CD4-positive, alpha-beta T cell (primary cell): ENCODE measurements at regions of chr19 and their contacts with region 1.

Region 1: GRCh38 chr19:42244347-42245220 is 2.2 kb upstream of the GSK3A start:
- DNase-seq: peak; percentile 82 to 96 (median 88)
- ATAC-seq: peak; percentile 41
- H3K4me3 ChIP-seq: peak overlapping the region; percentile 83
- H3K4me3 Mint-ChIP-seq: peak overlapping the region; percentile 95
- H3K27ac ChIP-seq: peak overlapping the region; percentile 71 to 95
- H3K27ac Mint-ChIP-seq: peak overlapping the region; percentile 81
- H3K4me1 ChIP-seq: peaks cover 50% of the 10 kb centered on the region
- H3K4me1 Mint-ChIP-seq: peaks cover 46% of the 10 kb centered on the region
- H3K27me3 ChIP-seq: no peaks in the 10 kb centered on the region
- H3K27me3 Mint-ChIP-seq: no peaks in the 10 kb centered on the region
- CTCF ChIP-seq: peak; percentile 73

Region 2: GRCh38 chr19:42176990-42177685 is 67.4 kb before region 1 on chr19:
- CTCF ChIA-PET with region 1: interaction called, 7 read pairs
- POLR2A ChIA-PET with region 1: interaction called, 14 read pairs
- intact Hi-C with region 1: no loop called
- DNase-seq: peak; percentile 61 to 91 (median 72)
- ATAC-seq: peak; percentile 95
- H3K4me3 ChIP-seq: peak overlapping the region; percentile 56
- H3K4me3 Mint-ChIP-seq: no peak overlapping the region
- H3K27ac ChIP-seq: no peak overlapping the region
- H3K27ac Mint-ChIP-seq: no peak overlapping the region
- H3K4me1 ChIP-seq: peaks cover 34% of the 10 kb centered on the region
- H3K4me1 Mint-ChIP-seq: peaks cover 25% of the 10 kb centered on the region
- H3K27me3 ChIP-seq: peaks cover 36 to 37% of the 10 kb centered on the region in 2 experiments
- H3K27me3 Mint-ChIP-seq: peaks cover 35% of the 10 kb centered on the region
- CTCF ChIP-seq: peak; percentile 35

Region 3: DNA sequence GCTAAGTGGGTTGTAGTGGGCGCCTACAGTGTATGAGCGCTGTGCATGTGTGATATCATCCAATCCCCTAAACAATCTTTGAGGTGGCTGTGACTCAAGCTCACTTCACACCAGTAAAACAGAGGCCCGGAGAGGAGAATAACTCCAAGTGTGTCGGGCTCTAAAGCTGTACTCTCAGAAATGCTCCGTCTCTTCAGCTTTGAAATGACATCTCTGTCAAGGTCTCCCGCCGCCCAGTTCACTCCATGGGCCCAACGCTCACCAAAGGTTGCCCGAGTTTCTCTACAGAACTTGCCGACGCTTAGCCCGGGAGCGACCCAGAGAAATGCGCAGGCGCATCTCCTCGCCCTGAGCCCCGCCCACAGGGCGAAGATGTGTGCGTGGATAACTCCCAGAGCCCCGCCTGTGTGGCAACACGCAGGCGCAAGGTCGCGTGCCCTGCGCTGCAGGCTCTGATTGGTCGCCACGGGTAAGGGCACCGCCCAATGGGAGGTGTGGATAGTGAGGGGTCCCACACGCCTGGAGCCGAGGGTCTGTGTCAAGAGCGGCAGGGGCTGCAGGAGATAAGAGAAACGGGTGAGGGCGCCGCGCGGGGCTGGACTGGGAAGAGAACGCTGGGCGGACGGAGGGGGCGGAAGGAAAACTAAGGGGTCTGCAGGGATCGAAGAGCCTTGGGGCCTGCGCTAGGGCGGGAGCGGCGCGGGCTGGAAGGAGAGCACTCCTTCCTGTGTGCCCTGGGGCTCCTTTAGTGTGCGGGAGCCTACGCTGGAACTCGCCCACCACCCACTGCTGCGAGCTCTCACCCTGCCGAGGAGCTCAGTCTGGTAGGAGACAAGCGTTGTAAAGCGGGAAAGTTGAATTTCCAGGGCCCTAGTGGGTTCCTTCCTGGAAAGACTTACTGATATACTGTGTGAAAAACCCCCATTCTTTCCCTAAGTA is 24.5 kb before region 1 on chr19 and contains the start of gene ZNF526:
- CTCF ChIA-PET with region 1: interaction called, 5 read pairs
- POLR2A ChIA-PET with region 1: interaction called, 32 read pairs
- intact Hi-C with region 1: loop called (anchors 1 kb)
- DNase-seq: peak; percentile 93 to 99 (median 96)
- ATAC-seq: peak; percentile 80
- H3K4me3 ChIP-seq: peak within 1 kb of the TSS; percentile 98
- H3K4me3 Mint-ChIP-seq: peak within 1 kb of the TSS; percentile 96
- H3K27ac ChIP-seq: peak within 1 kb of the TSS; percentile 70 to 78
- H3K27ac Mint-ChIP-seq: peak within 1 kb of the TSS; percentile 93
- H3K4me1 ChIP-seq: peaks cover 64% of the 10 kb centered on the region
- H3K4me1 Mint-ChIP-seq: peaks cover 58% of the 10 kb centered on the region
- H3K27me3 ChIP-seq: no peaks in the 10 kb centered on the region
- H3K27me3 Mint-ChIP-seq: no peaks in the 10 kb centered on the region
- CTCF ChIP-seq: no peak
- total RNA-seq, gene ZNF526: 5.0 to 6.2 TPM

Region 4: GRCh38 chr19:42254989-42255765 is 10.6 kb after region 1 on chr19 and contains the start of gene ERF:
- CTCF ChIA-PET with region 1: interaction called, 3 read pairs
- POLR2A ChIA-PET with region 1: interaction called, 8 read pairs
- intact Hi-C with region 1: loop called (anchors 1 kb)
- DNase-seq: peak; percentile 89 to 98 (median 92)
- ATAC-seq: peak; percentile 75
- H3K4me3 ChIP-seq: peak within 1 kb of the TSS; percentile 100
- H3K4me3 Mint-ChIP-seq: peak within 1 kb of the TSS; percentile 93
- H3K27ac ChIP-seq: peak within 1 kb of the TSS; percentile 97 to 98
- H3K27ac Mint-ChIP-seq: peak within 1 kb of the TSS; percentile 85
- H3K4me1 ChIP-seq: peaks cover 43% of the 10 kb centered on the region
- H3K4me1 Mint-ChIP-seq: peaks cover 28% of the 10 kb centered on the region
- H3K27me3 ChIP-seq: no peaks in the 10 kb centered on the region
- H3K27me3 Mint-ChIP-seq: no peaks in the 10 kb centered on the region
- CTCF ChIP-seq: no peak
- total RNA-seq, gene ERF: 105 to 113 TPM

Region 5: DNA sequence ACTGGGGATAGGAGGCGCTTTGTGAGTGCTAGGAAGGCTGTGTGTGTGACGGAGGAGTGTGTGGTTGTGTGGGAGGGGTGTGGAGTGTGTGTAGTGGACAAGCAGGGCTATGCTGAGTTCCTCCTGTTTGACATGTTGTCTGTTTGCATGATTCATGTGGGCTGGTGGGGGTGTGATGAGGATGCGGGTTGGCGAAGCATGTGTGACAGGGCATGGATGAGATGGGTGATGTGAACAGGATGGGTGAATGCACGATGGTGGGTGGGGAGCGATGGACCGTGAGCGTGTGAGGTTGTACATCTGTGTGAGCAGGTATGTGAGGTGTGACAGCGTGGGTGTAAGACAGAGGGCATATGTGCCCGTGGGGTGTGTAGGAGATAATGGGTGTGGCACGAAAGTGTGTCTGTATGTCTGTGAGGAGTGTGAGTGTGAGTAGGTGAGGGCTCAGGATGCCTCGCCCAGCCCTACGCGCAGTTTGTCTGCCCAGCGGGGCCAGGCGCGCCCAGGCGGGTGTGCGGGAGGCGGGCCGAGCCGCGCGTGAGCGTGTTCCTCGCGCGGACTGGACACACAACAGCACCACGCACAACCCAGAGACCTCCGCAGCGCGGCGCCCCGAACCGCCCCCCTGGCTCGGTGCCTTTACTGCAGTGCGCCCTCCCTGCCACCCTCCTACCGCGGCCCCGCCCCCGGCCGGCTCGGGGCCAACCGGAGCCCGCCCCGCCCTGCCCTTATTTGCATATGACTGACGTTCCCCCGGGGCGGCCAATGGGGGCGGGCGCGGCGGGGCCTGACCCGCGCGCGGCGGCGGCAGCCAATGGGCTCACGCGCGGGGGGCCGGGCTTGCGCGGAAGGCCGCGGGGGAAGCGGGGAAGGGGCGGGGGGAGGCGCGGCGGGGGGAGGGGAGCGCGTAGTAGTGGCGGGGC is 38.8 kb after region 1 on chr19:
- CTCF ChIA-PET with region 1: interaction called, 30 read pairs
- POLR2A ChIA-PET with region 1: interaction called, 53 read pairs
- intact Hi-C with region 1: loop called (anchors 1 to 2 kb)
- DNase-seq: peak; percentile 92 to 99 (median 97)
- ATAC-seq: peak; percentile 62
- H3K4me3 ChIP-seq: peak overlapping the region; percentile 55
- H3K4me3 Mint-ChIP-seq: no peak overlapping the region
- H3K27ac ChIP-seq: peak overlapping the region; percentile 86 to 88
- H3K27ac Mint-ChIP-seq: no peak overlapping the region
- H3K4me1 ChIP-seq: peaks cover 71% of the 10 kb centered on the region
- H3K4me1 Mint-ChIP-seq: peaks cover 43% of the 10 kb centered on the region
- H3K27me3 ChIP-seq: no peaks in the 10 kb centered on the region
- H3K27me3 Mint-ChIP-seq: no peaks in the 10 kb centered on the region
- CTCF ChIP-seq: no peak

Region 6: GRCh38 chr19:42325273-42325895 is 80.8 kb after region 1 on chr19 and contains the start of gene MEGF8:
- CTCF ChIA-PET with region 1: no interaction called
- POLR2A ChIA-PET with region 1: no interaction called
- intact Hi-C with region 1: loop called in 1 of 2 experiments (anchors 2 kb)
- DNase-seq: peak; percentile 97 to 99 (median 98)
- ATAC-seq: peak; percentile 95
- H3K4me3 ChIP-seq: peak within 1 kb of the TSS; percentile 84
- H3K4me3 Mint-ChIP-seq: peak within 1 kb of the TSS; percentile 94
- H3K27ac ChIP-seq: peak within 1 kb of the TSS; percentile 46 to 55
- H3K27ac Mint-ChIP-seq: peak within 1 kb of the TSS; percentile 50
- H3K4me1 ChIP-seq: peaks cover 26% of the 10 kb centered on the region
- H3K4me1 Mint-ChIP-seq: peaks cover 25% of the 10 kb centered on the region
- H3K27me3 ChIP-seq: peaks cover 16 to 21% of the 10 kb centered on the region in 2 experiments
- H3K27me3 Mint-ChIP-seq: peaks cover 25% of the 10 kb centered on the region
- CTCF ChIP-seq: peak; percentile 90
- total RNA-seq, gene MEGF8: 4.1 to 4.2 TPM

Region 7: DNA sequence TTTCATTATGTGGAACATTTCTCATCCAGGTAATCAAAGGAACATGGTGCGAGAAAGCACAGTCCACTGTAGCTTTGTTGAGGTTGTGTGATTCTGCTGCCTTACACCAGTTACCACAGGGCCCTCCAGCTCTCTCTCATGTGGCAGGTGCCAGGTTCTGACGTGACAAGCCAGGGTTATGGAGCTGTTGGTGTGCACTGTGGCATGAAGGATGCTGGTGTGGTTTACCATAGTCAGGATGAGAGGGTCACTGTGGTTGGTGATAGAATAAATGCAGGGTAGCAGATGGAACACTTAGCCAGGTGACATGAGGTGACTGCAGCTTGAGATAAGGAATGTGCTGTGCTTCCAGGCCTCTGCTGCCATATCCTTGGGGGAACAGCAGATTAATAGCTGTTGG is 1814.6 kb after region 1 on chr19:
- CTCF ChIA-PET with region 1: no interaction called
- POLR2A ChIA-PET with region 1: no interaction called
- intact Hi-C with region 1: no loop called
- DNase-seq: no peak
- ATAC-seq: no peak
- H3K4me3 ChIP-seq: no peak overlapping the region
- H3K4me3 Mint-ChIP-seq: no peak overlapping the region
- H3K27ac ChIP-seq: no peak overlapping the region
- H3K27ac Mint-ChIP-seq: no peak overlapping the region
- H3K4me1 ChIP-seq: no peaks in the 10 kb centered on the region
- H3K4me1 Mint-ChIP-seq: no peaks in the 10 kb centered on the region
- H3K27me3 ChIP-seq: no peaks in the 10 kb centered on the region
- H3K27me3 Mint-ChIP-seq: no peaks in the 10 kb centered on the region
- CTCF ChIP-seq: no peak